ENCODE measurements at regions of chr2 and their contacts with region 1.

Region 1: DNA sequence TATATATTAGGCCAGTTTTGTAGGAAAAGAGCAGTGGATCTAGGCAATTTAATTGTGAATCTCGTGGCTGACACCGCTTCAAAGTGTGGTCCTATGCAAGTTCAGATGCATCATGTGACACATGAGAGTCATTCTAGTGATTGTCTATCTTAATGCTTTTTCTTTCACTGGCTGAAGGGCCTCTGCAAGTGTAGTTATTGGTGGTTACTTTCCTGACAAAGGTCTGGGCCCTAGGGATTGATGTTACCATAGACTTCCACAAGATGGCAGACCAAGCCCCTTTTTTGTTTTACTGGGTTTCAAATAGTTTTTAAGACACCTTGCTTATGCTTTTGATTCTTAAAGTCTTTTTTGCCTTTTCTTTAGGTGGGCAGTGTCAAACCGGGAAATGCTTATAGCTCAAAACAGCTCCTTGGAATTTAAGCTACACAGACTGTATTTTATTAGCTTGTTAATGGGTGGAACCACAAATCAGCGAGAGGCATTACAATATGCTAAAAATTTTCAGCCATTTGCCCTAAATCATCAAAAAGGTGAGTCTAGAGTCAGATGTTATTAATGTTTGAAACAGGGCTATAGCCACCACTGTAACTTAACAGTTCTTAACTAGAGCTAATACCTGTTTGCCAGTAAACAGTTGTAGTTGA is 25.9 kb downstream of the CD8A start:
- DNase-seq: peak; percentile 30
- H3K4me3 Mint-ChIP-seq: no peak overlapping the region
- H3K27ac Mint-ChIP-seq: no peak overlapping the region
- H3K4me1 Mint-ChIP-seq: no peaks in the 10 kb centered on the region
- H3K27me3 Mint-ChIP-seq: no peaks in the 10 kb centered on the region
- CTCF ChIP-seq: no peak

Region 2: GRCh38 chr2:86623651-86624541 is 140.9 kb before region 1 on chr2 and contains the start of gene RNF103:
- CTCF ChIA-PET with region 1: no interaction called
- intact Hi-C with region 1: no loop called
- DNase-seq: peak; percentile 98
- H3K4me3 Mint-ChIP-seq: peak within 1 kb of the TSS; percentile 92
- H3K27ac Mint-ChIP-seq: peak within 1 kb of the TSS; percentile 95
- H3K4me1 Mint-ChIP-seq: peaks cover 9% of the 10 kb centered on the region
- H3K27me3 Mint-ChIP-seq: no peaks in the 10 kb centered on the region
- CTCF ChIP-seq: no peak
- total RNA-seq, gene RNF103: 33.3 and 34.1 TPM in 2 replicates

Region 3: DNA sequence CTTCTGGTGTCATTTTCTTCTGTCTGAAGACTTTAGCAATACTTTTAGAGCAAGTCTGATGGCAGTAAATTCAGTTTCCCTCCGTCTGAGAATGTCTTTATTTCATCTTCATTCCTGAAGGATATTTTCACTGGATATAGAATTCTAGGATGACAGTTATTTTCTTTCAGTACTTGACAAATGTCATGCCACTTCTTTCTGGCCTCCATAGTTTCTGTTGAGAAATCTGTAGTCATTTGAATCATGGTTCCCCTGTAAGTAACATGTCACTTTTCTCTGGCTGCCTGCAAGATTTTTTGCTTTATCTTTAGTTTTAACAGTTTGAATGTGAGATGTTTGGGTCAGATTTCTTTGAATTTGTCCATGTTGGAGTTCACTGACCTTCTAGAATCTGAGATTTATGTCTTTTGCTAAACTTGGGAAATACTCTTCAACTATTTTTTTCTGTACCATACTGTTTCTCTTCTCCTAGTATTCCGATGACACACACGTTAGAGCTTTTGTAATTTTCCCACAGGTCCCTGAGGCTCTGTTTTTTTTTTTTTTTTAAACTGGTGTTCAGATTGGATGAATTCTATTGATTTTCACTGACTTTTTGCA is 14.4 kb before region 1 on chr2:
- CTCF ChIA-PET with region 1: interaction called, 3 read pairs
- intact Hi-C with region 1: loop called (anchors 1 kb)
- DNase-seq: no peak
- H3K4me3 Mint-ChIP-seq: no peak overlapping the region
- H3K27ac Mint-ChIP-seq: no peak overlapping the region
- H3K4me1 Mint-ChIP-seq: peaks cover 27% of the 10 kb centered on the region
- H3K27me3 Mint-ChIP-seq: no peaks in the 10 kb centered on the region
- CTCF ChIP-seq: no peak

Region 4: DNA sequence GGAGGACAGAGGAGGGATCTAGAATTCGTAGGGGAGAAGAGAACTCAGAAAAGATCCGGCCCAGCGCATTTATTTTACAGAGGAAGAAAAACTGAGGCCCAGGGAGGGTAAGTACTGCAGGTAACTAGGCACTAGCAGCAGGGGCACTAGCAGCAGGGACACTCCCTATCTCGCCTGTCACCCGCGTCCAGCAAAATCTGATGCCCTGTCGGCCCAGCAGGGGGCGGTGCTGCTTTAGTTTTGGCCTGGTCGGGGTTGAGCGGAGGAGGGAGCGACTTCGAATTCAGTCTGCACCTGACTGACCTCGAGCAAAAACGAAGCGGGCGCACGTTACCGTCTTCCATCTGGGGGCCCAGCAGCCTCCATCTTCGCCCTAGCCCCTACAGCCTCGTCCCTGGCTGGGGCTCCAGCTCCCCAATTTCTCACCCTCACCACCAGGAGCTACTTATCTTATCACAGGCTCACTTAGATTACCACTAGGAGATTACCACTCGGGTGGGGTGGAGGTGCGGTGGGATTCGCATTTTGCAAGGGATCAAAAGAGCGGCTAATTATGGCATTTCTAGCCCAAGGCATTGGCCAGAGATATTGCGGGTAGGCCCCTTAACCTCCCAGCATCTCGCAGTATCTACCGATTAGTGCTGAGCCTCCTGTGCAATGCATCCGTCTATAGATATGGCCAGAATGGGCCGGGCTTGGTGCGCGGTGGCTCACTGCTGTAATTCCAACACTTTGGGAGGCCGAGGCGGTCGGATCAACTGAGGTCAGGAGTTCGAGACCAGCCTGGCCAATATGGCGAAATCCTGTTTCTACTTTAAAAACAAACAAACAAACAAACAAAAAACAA is 43.8 kb after region 1 on chr2:
- CTCF ChIA-PET with region 1: no interaction called
- intact Hi-C with region 1: loop called (anchors 2 kb)
- DNase-seq: peak; percentile 95
- H3K4me3 Mint-ChIP-seq: peak overlapping the region; percentile 82
- H3K27ac Mint-ChIP-seq: peak overlapping the region; percentile 57
- H3K4me1 Mint-ChIP-seq: peaks cover 9% of the 10 kb centered on the region
- H3K27me3 Mint-ChIP-seq: no peaks in the 10 kb centered on the region
- CTCF ChIP-seq: peak; percentile 94

Measured in Calu3 (cell line).